Activated CD4-positive, alpha-beta memory T cell treated with anti-CD3 and anti-CD28 coated beads for 36 hours (primary cell): ENCODE measurements at regions of chr20 and their contacts with region 1.

Region 1: DNA sequence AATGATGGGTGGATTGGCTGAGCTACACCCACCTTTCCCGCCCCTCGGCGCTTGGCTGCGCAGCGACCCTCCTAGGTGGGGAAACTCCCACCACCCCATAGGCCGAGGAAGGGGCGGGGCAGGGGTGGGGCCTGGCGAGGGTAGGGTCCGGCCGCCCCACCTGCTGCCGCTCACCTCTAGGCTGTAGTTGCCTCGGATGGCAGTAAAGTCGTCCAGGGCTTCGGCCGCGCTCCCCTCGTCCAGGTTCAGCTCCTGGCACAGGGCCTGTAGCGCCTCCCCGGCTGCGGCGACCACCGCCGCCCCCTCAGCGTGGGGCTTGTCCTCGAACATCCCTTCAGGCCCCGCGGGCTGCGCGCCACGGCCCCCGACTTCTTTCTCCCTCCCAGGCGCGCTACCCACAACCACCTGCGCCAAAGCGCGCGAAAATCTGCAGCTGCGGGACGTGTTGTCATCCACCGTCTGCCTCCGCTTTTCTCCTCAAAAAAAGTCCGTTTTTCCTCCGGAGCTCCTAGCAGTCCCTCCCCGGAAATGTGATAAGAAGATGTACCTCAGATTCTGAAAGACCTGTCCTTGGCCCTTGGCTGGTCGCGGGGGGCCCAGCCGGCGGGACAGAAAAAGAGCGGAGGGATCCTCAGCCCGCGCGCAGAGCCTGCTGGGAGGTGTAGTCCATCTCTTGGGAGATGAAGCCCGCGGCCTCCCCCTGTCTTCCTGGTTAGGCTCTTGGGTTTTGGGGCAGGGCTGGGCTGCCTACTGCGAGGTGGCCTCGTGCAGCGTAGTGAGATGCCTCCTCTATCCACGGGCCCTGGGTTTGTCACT is at the start of gene RBL1:
- DNase-seq: peak; percentile 92
- H3K4me3 Mint-ChIP-seq: peak within 1 kb of the TSS; percentile 93
- H3K27ac Mint-ChIP-seq: peak within 1 kb of the TSS; percentile 99
- H3K4me1 Mint-ChIP-seq: peaks cover 33% of the 10 kb centered on the region
- H3K27me3 Mint-ChIP-seq: no peaks in the 10 kb centered on the region
- total RNA-seq, gene RBL1: 41.4 to 41.6 TPM

Region 2: DNA sequence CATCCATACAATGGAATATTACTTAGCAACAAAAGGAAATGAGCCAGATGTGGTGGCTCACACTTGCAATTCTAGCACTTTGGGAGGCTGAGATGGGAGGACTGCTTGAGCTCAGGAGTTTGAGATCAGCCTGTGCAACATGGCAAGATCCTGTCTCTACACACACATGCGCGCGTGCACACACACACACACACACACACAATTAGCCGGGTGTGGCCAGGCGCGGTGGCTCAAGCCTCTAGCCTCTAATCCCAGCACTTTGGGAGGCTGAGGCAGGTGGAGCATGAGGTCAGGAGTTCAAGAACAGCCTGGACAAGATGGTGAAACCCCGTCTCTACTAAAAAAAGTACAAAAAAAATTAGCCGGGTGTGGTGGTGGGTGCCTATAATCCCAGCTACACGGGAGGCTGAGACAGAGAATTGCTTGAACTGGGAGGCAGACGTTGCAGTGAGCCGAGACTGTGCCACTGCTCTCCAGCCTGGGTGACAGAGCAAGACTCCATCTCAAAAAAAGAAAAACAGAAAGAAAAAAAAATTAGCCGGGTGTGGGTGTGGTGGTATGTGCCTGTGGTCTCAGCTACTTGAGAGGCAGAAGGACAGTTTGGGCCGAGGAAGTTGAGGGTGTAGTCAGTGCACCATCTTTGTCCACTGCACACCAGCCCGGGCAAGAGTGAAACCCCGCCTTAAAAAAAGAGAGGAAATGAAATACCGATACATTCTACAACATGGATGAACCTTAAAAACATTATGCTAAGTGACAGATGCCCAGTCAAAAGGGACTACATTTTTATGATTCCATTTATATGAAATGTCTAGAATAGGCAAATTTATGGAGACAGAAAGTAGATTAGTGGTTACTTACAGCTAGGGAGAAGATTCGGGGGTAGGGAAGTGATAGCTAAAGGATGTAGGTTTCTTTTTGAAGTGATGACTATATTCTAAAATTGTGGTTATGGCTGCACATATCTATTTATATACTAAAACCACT is 52.5 kb before region 1 on chr20:
- CTCF ChIA-PET with region 1: no interaction called
- POLR2A ChIA-PET with region 1: interaction called, 10 read pairs
- intact Hi-C with region 1: loop called (anchors 2 kb)
- DNase-seq: peak; percentile 40
- H3K4me3 Mint-ChIP-seq: peak overlapping the region; percentile 57
- H3K27ac Mint-ChIP-seq: peak overlapping the region; percentile 73
- H3K4me1 Mint-ChIP-seq: peaks cover 30% of the 10 kb centered on the region
- H3K27me3 Mint-ChIP-seq: no peaks in the 10 kb centered on the region

Region 3: GRCh38 chr20:37131486-37131885 is 35.7 kb after region 1 on chr20:
- CTCF ChIA-PET with region 1: no interaction called
- POLR2A ChIA-PET with region 1: no interaction called
- intact Hi-C with region 1: no loop called
- DNase-seq: no peak
- H3K4me3 Mint-ChIP-seq: no peak overlapping the region
- H3K27ac Mint-ChIP-seq: no peak overlapping the region
- H3K4me1 Mint-ChIP-seq: no peaks in the 10 kb centered on the region
- H3K27me3 Mint-ChIP-seq: peaks cover 1% of the 10 kb centered on the region

Region 4: DNA sequence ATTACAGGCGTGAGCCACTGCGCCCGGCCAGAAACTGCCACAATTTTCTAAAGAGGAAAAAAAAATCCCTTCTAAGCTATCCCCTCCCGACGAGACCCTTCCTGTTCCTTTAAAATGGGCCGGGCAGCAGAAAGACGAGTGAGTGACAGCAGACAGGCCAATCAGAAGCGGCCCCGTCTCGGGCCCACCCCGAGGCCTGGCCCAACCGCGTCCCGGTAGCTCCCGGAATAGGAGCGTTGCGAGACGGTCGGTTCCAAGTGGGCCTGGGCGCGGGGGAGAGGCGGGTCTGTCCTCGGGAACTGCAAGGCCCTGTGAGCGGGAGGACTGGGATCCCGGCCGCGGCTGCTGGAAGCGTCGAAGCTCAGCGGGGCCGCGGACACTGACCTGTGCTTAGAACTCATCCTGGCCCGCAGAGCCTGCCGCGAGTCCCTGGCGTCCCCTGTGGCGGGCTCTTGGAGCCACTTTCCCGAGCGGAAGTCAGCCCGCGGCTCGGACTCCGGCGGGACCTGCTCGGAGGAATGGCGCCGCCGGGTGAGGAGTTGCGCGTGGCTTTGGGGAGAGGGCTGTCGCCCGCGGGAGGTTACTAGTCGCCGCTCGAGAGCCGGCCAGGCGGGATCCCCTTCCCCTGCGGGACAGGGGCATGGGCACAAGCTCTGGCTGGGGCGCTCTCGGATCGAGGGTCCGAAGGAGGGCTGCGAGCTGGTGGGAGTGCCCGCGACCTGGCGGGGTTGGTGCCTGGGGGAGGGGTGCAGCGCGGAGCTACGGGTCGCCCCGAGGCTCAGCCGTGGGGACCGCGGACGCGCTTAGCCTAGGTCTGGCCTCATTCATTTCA is 83.2 kb after region 1 on chr20 and contains the starts of genes MROH8 and RPN2:
- CTCF ChIA-PET with region 1: interaction called, 15 read pairs
- POLR2A ChIA-PET with region 1: interaction called, 24 read pairs
- intact Hi-C with region 1: loop called (anchors 1 kb)
- DNase-seq: peak; percentile 98
- H3K4me3 Mint-ChIP-seq: peak within 1 kb of the TSS; percentile 95
- H3K27ac Mint-ChIP-seq: peak within 1 kb of the TSS; percentile 96
- H3K4me1 Mint-ChIP-seq: peaks cover 33% of the 10 kb centered on the region
- H3K27me3 Mint-ChIP-seq: no peaks in the 10 kb centered on the region
- total RNA-seq, gene MROH8: 1.8 to 2.0 TPM
- total RNA-seq, gene RPN2: 123 to 125 TPM